ENCODE measurements at regions of chr10 and their contacts with region 1.

Region 1: GRCh38 chr10:97612386-97612785 is 20.9 kb downstream of the MORN4 start:
- DNase-seq: no peak
- ATAC-seq: peak; percentile 98
- H3K4me3 ChIP-seq: no peak overlapping the region
- H3K27ac ChIP-seq: no peak overlapping the region
- H3K4me1 ChIP-seq: no peaks in the 10 kb centered on the region
- H3K27me3 ChIP-seq: no peaks in the 10 kb centered on the region
- CTCF ChIP-seq: peak in 1 of 3 experiments; percentile 65; a peak in 3 of 6 replicates
- EP300 ChIP-seq: no peak
- POLR2A ChIP-seq: no peak
- RAD21 ChIP-seq: peak; percentile 70

Region 2: DNA sequence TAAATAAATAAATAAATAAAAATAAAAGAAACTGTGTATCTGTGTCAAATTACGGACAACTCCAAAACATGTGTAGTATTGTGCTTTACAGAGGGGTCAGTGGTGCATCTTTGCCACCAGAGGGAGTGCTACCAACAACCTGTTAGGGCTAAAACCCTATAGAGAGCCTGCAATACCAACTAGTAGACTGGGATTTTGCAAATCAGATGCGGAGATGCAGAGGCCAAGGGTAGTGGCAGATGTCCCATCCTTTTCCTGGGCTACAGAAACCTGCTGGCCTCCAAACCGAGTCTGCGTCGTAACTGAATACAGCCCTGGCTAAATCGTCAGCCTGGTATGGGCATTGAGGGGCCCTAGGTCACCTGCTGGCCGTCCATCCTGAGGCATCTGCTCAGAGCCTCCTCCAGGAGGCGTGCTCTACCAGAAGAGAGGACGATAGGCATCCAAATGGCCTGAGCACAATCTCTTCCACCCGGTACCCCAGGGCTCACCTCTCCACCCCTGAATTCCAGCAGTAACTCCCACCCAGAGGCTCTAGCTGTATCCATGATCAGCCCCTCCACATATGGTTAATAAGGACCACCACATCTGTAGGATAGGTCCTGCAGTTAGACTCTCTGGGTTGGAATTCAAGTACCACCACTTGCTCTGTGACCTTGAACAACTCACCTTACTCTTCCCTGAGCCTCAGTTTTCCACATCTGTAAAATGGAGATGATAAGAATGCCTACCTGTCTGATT is 205.0 kb before region 1 on chr10:
- CTCF ChIA-PET with region 1: interaction called, 3 read pairs
- POLR2A ChIA-PET with region 1: no interaction called
- RAD21 ChIA-PET with region 1: no interaction called
- SMC1A ChIA-PET with region 1: no interaction called
- in situ Hi-C with region 1: no loop called
- intact Hi-C with region 1: loop called (anchors 1 kb)
- DNase-seq: no peak
- ATAC-seq: peak; percentile 99
- H3K4me3 ChIP-seq: no peak overlapping the region
- H3K27ac ChIP-seq: no peak overlapping the region
- H3K4me1 ChIP-seq: no peaks in the 10 kb centered on the region
- H3K27me3 ChIP-seq: no peaks in the 10 kb centered on the region
- CTCF ChIP-seq: peak; percentile 65 to 80 (median 67)
- EP300 ChIP-seq: no peak
- POLR2A ChIP-seq: no peak
- RAD21 ChIP-seq: peak; percentile 66

Region 3: GRCh38 chr10:97463363-97464132 is 148.8 kb before region 1 on chr10:
- CTCF ChIA-PET with region 1: interaction called, 3 read pairs
- POLR2A ChIA-PET with region 1: no interaction called
- RAD21 ChIA-PET with region 1: no interaction called
- SMC1A ChIA-PET with region 1: interaction called, 3 read pairs
- in situ Hi-C with region 1: no loop called
- intact Hi-C with region 1: loop called (anchors 5 kb)
- DNase-seq: peak; percentile 9
- ATAC-seq: peak; percentile 87
- H3K4me3 ChIP-seq: no peak overlapping the region
- H3K27ac ChIP-seq: no peak overlapping the region
- H3K4me1 ChIP-seq: no peaks in the 10 kb centered on the region
- H3K27me3 ChIP-seq: no peaks in the 10 kb centered on the region
- CTCF ChIP-seq: peak; percentile 77 to 85 (median 84)
- EP300 ChIP-seq: no peak
- POLR2A ChIP-seq: no peak
- RAD21 ChIP-seq: peak; percentile 71

Region 4: DNA sequence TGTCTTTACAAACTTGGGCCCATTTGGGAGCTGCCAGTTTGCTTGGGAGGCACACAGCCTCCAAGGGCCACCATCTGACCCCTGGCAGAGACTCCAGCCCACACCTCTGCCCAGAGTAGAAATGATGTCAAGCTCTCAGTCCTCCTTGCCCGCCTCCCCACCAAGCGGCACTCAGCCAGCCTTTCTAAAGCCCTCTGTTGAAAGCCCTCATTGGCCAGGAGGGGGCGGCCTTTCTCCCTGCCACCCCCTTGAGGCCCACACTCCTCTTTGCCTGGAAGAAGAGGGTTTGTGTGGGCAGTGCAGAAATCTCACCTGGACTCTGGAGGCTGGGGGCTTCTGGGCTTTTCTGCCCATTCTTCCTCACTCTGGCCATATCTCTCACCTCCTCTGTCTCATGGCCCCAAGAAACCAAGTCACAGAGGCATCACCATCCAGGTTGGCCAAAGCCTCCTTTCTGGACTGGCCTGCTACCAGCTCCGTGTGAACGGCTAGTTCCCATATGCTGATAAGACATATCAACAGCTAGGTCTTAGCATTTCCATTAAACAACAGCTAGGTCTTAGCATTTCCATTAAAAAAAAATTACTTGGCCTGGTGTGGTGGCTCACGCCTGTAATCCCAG is 77.5 kb before region 1 on chr10:
- CTCF ChIA-PET with region 1: interaction called, 5 read pairs
- POLR2A ChIA-PET with region 1: no interaction called
- RAD21 ChIA-PET with region 1: no interaction called
- SMC1A ChIA-PET with region 1: no interaction called
- in situ Hi-C with region 1: no loop called
- intact Hi-C with region 1: loop called (anchors 1 kb)
- DNase-seq: no peak
- ATAC-seq: peak; percentile 98
- H3K4me3 ChIP-seq: no peak overlapping the region
- H3K27ac ChIP-seq: no peak overlapping the region
- H3K4me1 ChIP-seq: no peaks in the 10 kb centered on the region
- H3K27me3 ChIP-seq: no peaks in the 10 kb centered on the region
- CTCF ChIP-seq: peak; percentile 60 to 69 (median 63)
- EP300 ChIP-seq: no peak
- POLR2A ChIP-seq: no peak
- RAD21 ChIP-seq: peak; percentile 70

Region 5: DNA sequence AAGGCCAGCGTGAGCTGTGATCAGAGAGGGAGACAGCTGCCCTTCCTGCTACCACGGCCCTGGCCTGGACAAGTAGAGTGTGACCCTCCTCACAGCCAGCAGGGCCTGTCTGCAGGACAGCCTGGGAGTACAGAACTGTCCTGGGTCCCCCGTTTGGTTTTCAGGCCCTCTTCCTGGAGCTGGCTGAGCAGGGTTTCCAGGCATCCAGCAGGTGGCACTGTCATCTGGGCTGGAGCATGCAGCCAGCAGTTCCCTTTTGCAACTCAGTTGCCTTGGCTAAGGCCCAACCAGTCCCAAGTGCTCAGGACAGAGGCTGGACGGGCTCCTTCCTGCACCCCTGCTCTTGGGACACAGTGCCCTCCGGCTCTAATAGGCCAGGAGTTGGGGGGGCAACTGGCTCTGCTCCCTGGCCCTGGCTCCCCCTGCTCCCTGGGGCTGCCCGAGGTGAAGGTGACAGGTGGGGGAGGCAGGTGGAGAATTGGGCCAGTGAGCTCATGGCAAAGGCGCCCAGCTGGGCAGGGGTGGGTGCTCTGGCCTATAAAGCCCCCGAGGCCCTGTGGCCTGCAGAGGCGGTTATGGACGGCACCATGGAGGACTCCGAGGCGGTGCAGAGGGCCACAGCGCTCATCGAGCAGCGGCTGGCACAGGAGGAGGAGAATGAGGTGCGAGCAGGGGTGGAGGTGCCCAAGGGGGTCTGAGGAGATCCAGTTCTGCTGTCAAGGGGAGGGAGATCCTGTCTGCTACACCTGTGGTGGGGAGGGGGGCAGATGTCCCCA is 40.0 kb before region 1 on chr10 and contains the start of gene ANKRD2:
- CTCF ChIA-PET with region 1: interaction called, 14 read pairs
- POLR2A ChIA-PET with region 1: no interaction called
- RAD21 ChIA-PET with region 1: interaction called, 6 read pairs
- SMC1A ChIA-PET with region 1: interaction called, 9 read pairs
- in situ Hi-C with region 1: no loop called
- intact Hi-C with region 1: loop called (anchors 1 kb)
- DNase-seq: no peak
- ATAC-seq: peak; percentile 97
- H3K4me3 ChIP-seq: no peak within 1 kb of the TSS
- H3K27ac ChIP-seq: no peak within 1 kb of the TSS
- H3K4me1 ChIP-seq: no peaks in the 10 kb centered on the region
- H3K27me3 ChIP-seq: no peaks in the 10 kb centered on the region
- CTCF ChIP-seq: peak; percentile 89 to 95 (median 94)
- EP300 ChIP-seq: no peak
- POLR2A ChIP-seq: no peak
- RAD21 ChIP-seq: peak; percentile 73
- polyA plus RNA-seq, gene ANKRD2: not detected

Measured in GM12878 (cell line).